Dendritic cell treated with granulocyte-macrophage colony-stimulating factor and Interleukin-4, amounts not matched to agents 40 ng/mL and 50 ng/mL, for 4 days (primary cell): ENCODE measurements at regions of chr3 and their contacts with region 1.

Region 1: DNA sequence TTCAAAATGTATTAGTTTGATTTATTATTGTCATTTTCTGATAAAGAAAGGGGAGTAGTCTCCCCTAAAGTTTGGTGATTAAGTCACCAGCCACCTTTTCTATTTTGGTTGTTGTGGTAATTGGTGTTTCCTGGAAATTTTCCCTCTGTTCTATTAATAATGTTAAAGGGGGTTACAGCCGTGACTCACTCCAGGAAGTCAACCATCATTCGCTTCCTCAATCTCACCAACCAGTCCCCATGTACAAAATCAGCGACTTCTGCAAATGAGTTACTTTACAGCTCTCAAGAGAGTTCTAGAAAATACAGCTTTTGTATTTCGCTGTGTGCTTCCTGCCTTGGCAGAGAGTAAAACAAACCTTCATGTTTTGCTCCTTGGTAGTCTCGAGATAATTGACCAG is 285.1 kb downstream of the LPP start:
- H3K4me3 Mint-ChIP-seq: no peak overlapping the region
- H3K27ac Mint-ChIP-seq: peak overlapping the region; percentile 72
- H3K4me1 Mint-ChIP-seq: peaks cover 30% of the 10 kb centered on the region
- H3K27me3 Mint-ChIP-seq: no peaks in the 10 kb centered on the region

Region 2: GRCh38 chr3:188389711-188390342 is 49.3 kb before region 1 on chr3:
- intact Hi-C with region 1: loop called (anchors 2 kb)
- H3K4me3 Mint-ChIP-seq: peak overlapping the region; percentile 34
- H3K27ac Mint-ChIP-seq: peak overlapping the region; percentile 96
- H3K4me1 Mint-ChIP-seq: peaks cover 66% of the 10 kb centered on the region
- H3K27me3 Mint-ChIP-seq: no peaks in the 10 kb centered on the region

Region 3: GRCh38 chr3:188400494-188401243 is 38.4 kb before region 1 on chr3:
- intact Hi-C with region 1: loop called (anchors 5 kb)
- H3K4me3 Mint-ChIP-seq: no peak overlapping the region
- H3K27ac Mint-ChIP-seq: peak overlapping the region; percentile 84
- H3K4me1 Mint-ChIP-seq: peaks cover 60% of the 10 kb centered on the region
- H3K27me3 Mint-ChIP-seq: no peaks in the 10 kb centered on the region